Activated CD4-positive, alpha-beta T cell treated with anti-CD3 and anti-CD28 coated beads for 36 hours (primary cell): ENCODE measurements at regions of chr18 and their contacts with region 1.

Region 1: GRCh38 chr18:79393635-79394533 is 1.8 kb upstream of the NFATC1 start:
- DNase-seq: peak; percentile 69
- ATAC-seq: peak; percentile 8
- H3K4me3 Mint-ChIP-seq: peak overlapping the region; percentile 73
- H3K27ac Mint-ChIP-seq: peak overlapping the region; percentile 78
- H3K4me1 Mint-ChIP-seq: peaks cover 16% of the 10 kb centered on the region
- H3K27me3 Mint-ChIP-seq: peaks cover 10% of the 10 kb centered on the region

Region 2: GRCh38 chr18:79068937-79069791 is 324.7 kb before region 1 on chr18 and contains the start of gene ATP9B:
- CTCF ChIA-PET with region 1: no interaction called
- POLR2A ChIA-PET with region 1: no interaction called
- intact Hi-C with region 1: loop called in 1 of 2 experiments (anchors 1 kb)
- DNase-seq: peak; percentile 99
- ATAC-seq: peak; percentile 83
- H3K4me3 Mint-ChIP-seq: peak within 1 kb of the TSS; percentile 87
- H3K27ac Mint-ChIP-seq: peak within 1 kb of the TSS; percentile 99
- H3K4me1 Mint-ChIP-seq: peaks cover 38% of the 10 kb centered on the region
- H3K27me3 Mint-ChIP-seq: peaks cover 11% of the 10 kb centered on the region
- total RNA-seq, gene ATP9B: 19.4 to 20.8 TPM

Region 3: DNA sequence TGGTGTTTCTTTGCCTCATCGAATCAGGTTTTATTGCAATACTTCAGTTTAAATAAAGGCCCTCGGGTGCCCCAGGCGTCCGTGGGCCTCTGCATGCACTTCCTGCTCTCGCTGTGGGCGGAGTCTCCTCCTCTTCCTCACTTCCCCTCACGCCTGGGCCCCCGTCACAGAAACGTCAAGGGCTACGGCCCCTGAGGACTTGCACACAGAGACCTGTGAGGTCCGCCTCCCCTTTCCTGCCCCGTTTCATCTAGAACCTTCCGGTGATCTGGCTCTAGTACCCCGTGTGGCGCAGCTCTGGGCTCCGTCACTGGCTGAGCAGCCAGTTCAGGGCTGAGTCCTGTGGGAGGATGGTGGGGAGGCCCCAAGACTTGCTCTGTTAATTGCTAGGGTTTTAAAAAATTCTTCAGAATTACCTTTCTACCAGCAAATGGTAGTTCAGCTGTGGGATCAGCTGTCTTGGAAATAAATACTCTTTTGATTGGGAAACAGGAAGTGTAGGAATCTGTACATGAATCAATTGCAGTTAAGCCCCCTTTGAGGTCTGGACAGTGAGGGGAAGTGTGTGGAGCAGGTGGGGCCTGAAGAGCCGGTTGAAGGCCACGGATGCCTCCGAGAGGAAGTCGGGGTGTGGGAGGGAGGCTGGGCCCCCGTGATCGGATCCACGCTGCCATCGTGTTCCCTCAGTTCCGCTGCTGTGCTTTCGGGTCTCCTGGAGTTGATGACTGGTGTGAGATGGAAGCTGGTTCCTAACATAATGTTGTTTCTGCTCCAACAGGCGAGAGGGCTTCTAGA is 12.1 kb after region 1 on chr18:
- CTCF ChIA-PET with region 1: interaction called, 3 read pairs
- POLR2A ChIA-PET with region 1: interaction called, 11 read pairs
- intact Hi-C with region 1: loop called (anchors 1 kb)
- DNase-seq: peak; percentile 94
- ATAC-seq: peak; percentile 86
- H3K4me3 Mint-ChIP-seq: peak overlapping the region; percentile 83
- H3K27ac Mint-ChIP-seq: peak overlapping the region; percentile 96
- H3K4me1 Mint-ChIP-seq: peaks cover 65% of the 10 kb centered on the region
- H3K27me3 Mint-ChIP-seq: no peaks in the 10 kb centered on the region

Region 4: GRCh38 chr18:79679111-79679872 is 285.4 kb after region 1 on chr18 and contains the start of gene CTDP1:
- CTCF ChIA-PET with region 1: interaction called, 4 read pairs
- POLR2A ChIA-PET with region 1: no interaction called
- intact Hi-C with region 1: loop called (anchors 1 to 2 kb)
- DNase-seq: peak; percentile 99
- ATAC-seq: peak; percentile 91
- H3K4me3 Mint-ChIP-seq: peak within 1 kb of the TSS; percentile 90
- H3K27ac Mint-ChIP-seq: peak within 1 kb of the TSS; percentile 97
- H3K4me1 Mint-ChIP-seq: peaks cover 65% of the 10 kb centered on the region
- H3K27me3 Mint-ChIP-seq: no peaks in the 10 kb centered on the region
- total RNA-seq, gene CTDP1: 36.7 to 45.5 TPM

Region 5: DNA sequence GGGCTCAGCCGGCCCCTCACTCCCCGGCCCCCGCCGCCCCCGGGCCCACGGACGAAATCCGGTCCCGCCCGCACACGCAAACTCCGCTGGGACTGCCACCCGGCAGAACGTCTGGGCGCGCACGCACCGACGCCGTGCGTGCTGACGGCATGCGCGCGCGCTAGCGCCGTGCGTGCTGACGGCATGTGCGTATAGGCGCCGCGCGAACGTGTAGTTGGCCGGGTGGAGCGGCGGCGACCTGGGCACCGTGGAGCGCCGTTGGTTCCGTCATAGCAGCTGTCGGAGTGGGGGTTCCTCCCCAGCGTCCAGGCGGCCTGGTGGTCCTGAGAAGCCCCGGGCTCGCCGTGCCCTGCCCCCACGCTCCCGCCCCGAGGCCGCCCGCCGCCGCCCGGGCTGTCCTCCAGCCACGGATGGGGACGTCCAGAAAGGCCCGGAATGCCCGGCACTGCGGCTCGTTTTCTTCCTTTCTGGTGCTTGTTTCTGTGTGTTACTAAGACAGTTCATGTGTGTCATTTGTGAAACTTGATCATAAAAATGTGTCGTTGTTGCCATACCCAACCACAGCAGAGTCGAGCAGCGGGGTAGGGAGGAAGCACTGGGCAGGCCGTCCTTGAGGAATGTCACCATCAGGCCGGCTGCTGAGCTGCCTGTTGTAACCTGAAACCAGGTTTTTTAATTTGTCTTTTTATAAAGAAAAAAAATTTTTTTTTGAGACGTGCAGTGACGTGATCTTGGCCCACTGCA is 594.7 kb after region 1 on chr18 and contains the start of gene TXNL4A:
- CTCF ChIA-PET with region 1: no interaction called
- POLR2A ChIA-PET with region 1: no interaction called
- intact Hi-C with region 1: loop called in 1 of 2 experiments (anchors 1 kb)
- DNase-seq: peak; percentile 92
- ATAC-seq: peak; percentile 98
- H3K4me3 Mint-ChIP-seq: peak within 1 kb of the TSS; percentile 92
- H3K27ac Mint-ChIP-seq: peak within 1 kb of the TSS; percentile 98
- H3K4me1 Mint-ChIP-seq: peaks cover 31% of the 10 kb centered on the region
- H3K27me3 Mint-ChIP-seq: no peaks in the 10 kb centered on the region
- total RNA-seq, gene TXNL4A: 150 to 194 TPM